ENCODE measurements at regions of chr22 and their contacts with region 1.

Region 1: GRCh38 chr22:41403532-41404318 is 22.0 kb downstream of the TEF start:
- DNase-seq: peak; percentile 94

Region 2: DNA sequence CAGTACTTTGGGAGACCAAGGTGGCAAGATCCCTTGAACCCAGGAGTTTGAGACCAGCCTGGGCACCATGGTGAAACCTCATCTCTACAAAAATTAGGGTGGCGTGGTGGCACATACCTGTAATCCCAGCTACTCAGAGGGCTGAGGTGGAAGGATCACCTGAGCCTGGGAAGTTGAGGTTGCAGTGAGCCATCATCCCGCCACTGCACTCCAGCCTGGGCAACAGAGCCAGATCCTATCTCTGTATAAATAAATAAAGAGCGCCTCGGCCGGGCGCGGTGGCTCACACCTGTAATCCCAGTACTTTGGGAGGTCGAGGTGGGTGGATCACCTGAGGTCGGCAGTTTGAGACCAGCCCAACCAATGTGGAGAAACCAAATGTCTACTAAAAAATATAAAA is 15.0 kb after region 1 on chr22:
- CTCF ChIA-PET with region 1: no interaction called
- POLR2A ChIA-PET with region 1: no interaction called
- DNase-seq: no peak

Region 3: DNA sequence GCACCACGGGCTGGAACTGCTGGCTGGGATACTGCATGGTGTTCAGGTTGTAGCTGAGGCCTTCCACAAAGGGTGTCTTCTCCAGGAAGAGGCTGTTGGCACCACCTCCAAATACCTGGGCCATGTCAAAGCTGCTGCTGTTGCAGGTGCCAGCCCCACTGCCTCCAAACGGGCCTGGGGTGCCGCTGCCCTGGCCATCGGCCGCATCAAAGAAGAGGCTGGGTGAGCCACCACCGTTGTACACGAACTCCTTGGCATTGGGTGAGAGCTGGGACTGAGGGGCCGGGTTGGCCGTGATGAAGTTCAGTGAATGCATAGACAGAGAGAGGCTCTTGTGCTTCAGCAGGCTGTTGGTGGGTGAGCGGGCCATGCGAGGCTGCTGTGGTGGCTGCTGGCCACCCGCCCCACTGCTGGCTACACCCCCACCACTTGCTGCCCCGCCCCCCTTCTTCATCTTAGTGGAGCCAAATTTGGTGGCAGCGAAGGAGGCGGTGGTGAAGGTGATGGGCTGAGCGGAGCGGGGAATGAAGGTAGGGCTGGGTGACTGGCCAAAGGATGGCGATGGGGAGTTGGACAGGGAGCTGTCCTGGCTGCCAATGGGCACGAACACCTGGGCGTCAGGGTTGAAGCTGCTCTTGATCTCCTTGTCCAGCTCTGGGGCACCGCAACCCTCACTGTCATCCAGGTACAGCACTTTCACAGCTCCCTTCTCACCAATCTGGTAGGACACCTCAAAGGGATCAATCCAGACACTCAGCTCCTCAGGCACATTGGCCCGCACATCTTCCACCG is 32.8 kb after region 1 on chr22:
- CTCF ChIA-PET with region 1: no interaction called
- POLR2A ChIA-PET with region 1: no interaction called
- DNase-seq: no peak

Region 4: DNA sequence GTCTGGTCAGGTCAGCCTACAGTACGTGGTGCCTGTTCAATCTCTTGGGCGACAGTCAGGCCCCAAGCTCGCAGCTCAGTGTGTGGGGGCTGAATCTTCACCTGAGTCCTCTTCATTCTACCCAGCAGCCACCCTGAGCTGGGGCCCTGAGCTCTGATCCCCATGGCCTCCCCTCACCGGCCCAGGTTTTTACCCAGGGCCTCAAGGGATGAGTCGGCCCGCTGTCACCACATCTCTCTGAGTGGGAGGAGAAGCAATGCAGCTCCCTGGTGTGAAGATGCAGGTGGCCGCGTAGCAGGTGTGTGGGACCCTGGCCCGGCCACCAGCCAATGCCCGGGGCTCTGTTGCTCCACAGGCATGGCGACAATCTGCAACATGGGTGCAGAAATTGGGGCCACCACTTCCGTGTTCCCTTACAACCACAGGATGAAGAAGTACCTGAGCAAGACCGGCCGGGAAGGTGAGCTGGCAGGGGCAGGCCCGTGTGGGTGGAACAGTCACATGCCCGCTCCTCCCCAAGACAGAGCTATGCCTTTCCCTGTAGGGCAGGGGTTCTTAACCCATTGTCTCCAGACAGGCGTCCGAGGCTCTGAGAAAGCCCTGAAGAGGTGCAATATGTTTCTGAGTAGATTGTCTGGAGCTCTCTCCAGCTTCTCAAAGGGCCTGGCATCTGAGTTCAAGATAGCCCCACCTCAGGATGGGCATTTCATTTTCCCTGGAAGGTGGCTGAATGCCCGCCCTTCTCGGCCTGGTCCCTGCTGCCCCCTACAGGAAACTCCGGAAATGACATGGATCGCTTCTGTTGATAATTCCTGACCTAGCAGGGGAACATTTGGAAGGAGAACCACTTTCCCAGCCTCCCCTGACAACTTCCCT is 113.7 kb after region 1 on chr22:
- CTCF ChIA-PET with region 1: interaction called, 58 read pairs
- POLR2A ChIA-PET with region 1: interaction called, 4 read pairs
- DNase-seq: peak; percentile 81

Region 5: GRCh38 chr22:41526837-41527799 is 123.4 kb after region 1 on chr22:
- CTCF ChIA-PET with region 1: interaction called, 21 read pairs
- POLR2A ChIA-PET with region 1: no interaction called
- DNase-seq: peak; percentile 67